K562 (cell line): ENCODE measurements at regions of chr16 and their contacts with region 1.

Region 1: DNA sequence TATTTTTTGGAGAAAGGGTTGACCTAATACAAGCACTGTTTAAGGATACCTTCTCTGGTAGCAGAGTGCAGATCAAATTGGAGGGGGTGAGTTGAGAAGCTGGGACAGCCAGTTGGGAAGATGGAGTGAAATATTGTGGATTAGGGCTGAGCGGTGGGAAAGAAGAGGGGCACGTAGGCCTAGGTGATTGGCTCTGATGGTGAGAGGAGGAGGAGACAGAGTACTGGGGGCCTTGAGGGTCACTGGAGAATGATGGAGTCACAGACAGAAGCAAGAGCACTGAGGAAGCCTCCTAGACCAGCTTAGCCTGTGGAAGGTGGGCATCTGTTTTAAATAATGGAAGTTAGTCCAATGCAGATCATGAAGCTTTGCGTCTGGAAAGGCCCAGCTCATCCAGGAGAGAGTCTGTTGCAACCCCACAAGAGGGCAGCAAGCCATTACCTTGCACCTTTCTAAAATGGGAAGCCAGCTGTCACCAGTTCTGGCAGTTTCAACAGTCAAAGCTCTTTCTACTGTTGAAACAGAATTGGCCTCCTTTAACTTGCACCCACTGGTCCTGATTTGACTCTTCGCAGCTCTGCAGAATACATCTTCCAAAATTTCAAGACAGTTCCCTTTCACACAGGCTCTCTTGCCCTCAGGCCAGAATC is 11.8 kb downstream of the SLC9A5 start:
- DNase-seq: peak; percentile 29 to 79 (median 48)
- ATAC-seq: peak; percentile 92
- H3K4me3 ChIP-seq: no peak overlapping the region
- H3K27ac ChIP-seq: peak overlapping the region; percentile 37; the same call in 1 of the 3 replicates
- H3K4me1 ChIP-seq: peaks cover 3 to 15% of the 10 kb centered on the region in 2 experiments; a peak in 3 of 5 replicates
- H3K27me3 ChIP-seq: no peaks in the 10 kb centered on the region
- CTCF ChIP-seq: peak; percentile 84 to 95 (median 87)
- EP300 ChIP-seq: 0 out of 2 replicates have a peak, but pooled peaks have one; percentile 7
- POLR2A ChIP-seq: no peak
- RAD21 ChIP-seq: peak; percentile 92 to 97

Region 2: DNA sequence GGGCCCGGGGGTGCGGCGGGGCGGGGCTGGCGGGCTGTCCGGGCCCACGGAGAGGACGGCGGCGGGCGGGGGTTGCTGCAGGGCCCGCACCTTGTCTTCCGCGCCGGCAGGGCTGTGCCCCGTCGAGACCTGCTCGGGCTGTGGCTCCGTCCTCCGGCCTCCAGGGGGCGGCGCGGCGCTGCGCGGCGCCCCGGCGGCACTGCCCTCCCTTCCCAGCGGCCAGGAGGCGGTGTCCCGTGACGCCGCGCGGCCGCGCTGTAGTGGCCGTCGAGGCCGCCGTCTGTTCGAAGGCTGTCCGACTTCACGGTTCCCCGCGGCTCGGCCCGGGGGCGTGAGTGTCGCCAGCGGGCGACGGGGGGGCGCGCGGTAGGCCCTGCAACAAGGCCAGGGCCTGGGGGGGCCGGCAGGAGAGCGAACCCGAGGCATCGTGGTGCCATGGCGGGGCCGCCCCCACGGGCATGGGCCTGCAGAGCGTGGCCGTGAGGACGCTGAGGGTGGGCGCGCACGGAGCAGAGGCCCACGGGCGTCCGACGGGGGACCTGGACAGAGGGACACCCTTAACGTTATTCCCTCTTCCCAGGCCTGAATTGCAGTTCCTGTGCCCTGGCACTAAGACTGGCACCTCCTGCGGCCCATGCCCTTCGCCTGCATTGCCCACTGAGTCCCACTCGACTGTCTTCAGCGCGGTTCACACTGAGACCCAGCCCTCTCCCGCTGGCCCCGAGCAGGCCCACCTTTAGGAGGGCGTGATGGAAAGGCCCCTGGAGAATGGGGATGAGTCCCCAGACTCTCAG is 18.9 kb after region 1 on chr16 and contains the start of gene PLEKHG4:
- CTCF ChIA-PET with region 1: interaction called, 18 read pairs
- POLR2A ChIA-PET with region 1: interaction called, 3 read pairs
- in situ Hi-C with region 1: no loop called
- intact Hi-C with region 1: loop called (anchors 1 kb)
- DNase-seq: peak in 2 of 4 experiments; percentile 91 to 96
- ATAC-seq: peak; percentile 98
- H3K4me3 ChIP-seq: peak within 1 kb of the TSS; percentile 74
- H3K27ac ChIP-seq: peak within 1 kb of the TSS; percentile 83
- H3K4me1 ChIP-seq: peaks cover 22 to 44% of the 10 kb centered on the region in 2 experiments
- H3K27me3 ChIP-seq: no peaks in the 10 kb centered on the region
- CTCF ChIP-seq: peak; percentile 67 to 97 (median 93)
- EP300 ChIP-seq: peak; percentile 8; the same call in 1 of the 2 replicates
- POLR2A ChIP-seq: peak; percentile 69
- RAD21 ChIP-seq: peak; percentile 78 to 88
- polyA plus RNA-seq, gene PLEKHG4: 3.7 to 4.7 TPM

Region 3: DNA sequence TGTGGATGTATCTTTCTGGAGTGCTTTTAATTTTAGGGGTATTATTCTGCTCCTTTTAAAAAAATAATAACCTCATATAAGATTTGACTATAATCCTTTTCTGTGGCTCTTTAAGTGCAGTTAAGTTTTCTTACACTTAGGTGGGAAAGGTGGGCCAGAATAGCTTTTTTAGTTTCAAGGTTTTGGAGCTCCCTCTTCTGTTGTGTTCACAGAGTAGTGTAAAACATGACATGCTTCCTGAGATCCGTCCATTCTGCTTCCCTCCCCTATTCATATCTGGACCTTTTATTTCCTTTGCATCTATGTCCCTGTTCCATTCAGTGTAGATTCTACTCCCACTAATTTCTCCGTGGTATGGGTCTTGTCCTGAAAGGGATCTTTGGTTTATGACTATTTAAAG is 78.9 kb after region 1 on chr16:
- CTCF ChIA-PET with region 1: interaction called, 9 read pairs
- POLR2A ChIA-PET with region 1: no interaction called
- in situ Hi-C with region 1: no loop called
- intact Hi-C with region 1: loop called (anchors 5 kb)
- DNase-seq: peak in 1 of 4 experiments; percentile 31
- ATAC-seq: peak; percentile 59
- H3K4me3 ChIP-seq: no peak overlapping the region
- H3K27ac ChIP-seq: no peak overlapping the region
- H3K4me1 ChIP-seq: no peaks in the 10 kb centered on the region
- H3K27me3 ChIP-seq: no peaks in the 10 kb centered on the region
- CTCF ChIP-seq: peak in 2 of 3 experiments; percentile 22 to 52; a peak in 3 of 6 replicates
- EP300 ChIP-seq: no peak
- POLR2A ChIP-seq: no peak
- RAD21 ChIP-seq: peak; percentile 15 to 55; a peak in 3 of 4 replicates

Region 4: DNA sequence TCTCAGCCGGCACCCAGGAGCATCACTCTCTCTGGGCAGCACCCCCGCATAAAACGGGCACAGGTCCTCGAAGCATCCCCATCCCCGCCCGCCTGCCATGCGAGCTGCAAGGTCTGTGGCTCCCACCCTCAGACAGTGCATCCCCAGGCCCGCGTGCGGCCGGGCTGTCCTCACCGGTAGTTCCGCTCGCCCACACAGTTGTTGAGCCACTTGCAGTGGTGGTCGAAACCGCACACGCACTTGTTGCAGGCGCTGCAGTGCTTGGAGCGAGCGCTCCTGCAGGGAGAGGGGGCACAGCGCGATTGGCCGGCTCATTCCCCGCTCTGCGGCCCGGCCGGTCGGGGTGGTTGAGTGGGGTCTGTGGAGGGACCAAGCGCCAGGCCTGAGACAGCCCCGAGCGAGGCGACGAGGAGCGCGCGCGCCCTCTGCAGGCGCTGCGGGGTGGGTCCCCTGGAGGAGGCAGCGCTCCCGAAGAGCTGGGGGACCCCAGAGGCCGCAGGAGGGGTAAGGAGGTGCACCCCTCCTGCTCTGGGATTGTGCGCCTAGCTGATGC is 138.7 kb after region 1 on chr16:
- CTCF ChIA-PET with region 1: interaction called, 9 read pairs
- POLR2A ChIA-PET with region 1: interaction called, 4 read pairs
- in situ Hi-C with region 1: no loop called
- intact Hi-C with region 1: loop called (anchors 5 kb)
- DNase-seq: peak; percentile 75 to 84 (median 82)
- ATAC-seq: peak; percentile 88
- H3K4me3 ChIP-seq: no peak overlapping the region
- H3K27ac ChIP-seq: no peak overlapping the region
- H3K4me1 ChIP-seq: peaks cover 19 to 67% of the 10 kb centered on the region in 2 experiments
- H3K27me3 ChIP-seq: peaks cover 2 to 13% of the 10 kb centered on the region in 2 experiments; a peak in 2 of 5 replicates
- CTCF ChIP-seq: peak; percentile 84 to 94 (median 89)
- EP300 ChIP-seq: no peak
- POLR2A ChIP-seq: no peak
- RAD21 ChIP-seq: peak; percentile 74 to 89

Region 5: GRCh38 chr16:67468731-67469130 is 208.2 kb after region 1 on chr16:
- CTCF ChIA-PET with region 1: no interaction called
- POLR2A ChIA-PET with region 1: interaction called, 4 read pairs
- in situ Hi-C with region 1: no loop called
- intact Hi-C with region 1: loop called (anchors 5 kb)
- DNase-seq: no peak
- ATAC-seq: no peak
- H3K4me3 ChIP-seq: no peak overlapping the region
- H3K27ac ChIP-seq: no peak overlapping the region
- H3K4me1 ChIP-seq: peaks cover 11 to 13% of the 10 kb centered on the region in 2 experiments; a peak in 4 of 5 replicates
- H3K27me3 ChIP-seq: no peaks in the 10 kb centered on the region
- CTCF ChIP-seq: no peak
- EP300 ChIP-seq: no peak
- POLR2A ChIP-seq: no peak
- RAD21 ChIP-seq: no peak